ENCODE measurements at regions of chr15 and their contacts with region 1.

Region 1: DNA sequence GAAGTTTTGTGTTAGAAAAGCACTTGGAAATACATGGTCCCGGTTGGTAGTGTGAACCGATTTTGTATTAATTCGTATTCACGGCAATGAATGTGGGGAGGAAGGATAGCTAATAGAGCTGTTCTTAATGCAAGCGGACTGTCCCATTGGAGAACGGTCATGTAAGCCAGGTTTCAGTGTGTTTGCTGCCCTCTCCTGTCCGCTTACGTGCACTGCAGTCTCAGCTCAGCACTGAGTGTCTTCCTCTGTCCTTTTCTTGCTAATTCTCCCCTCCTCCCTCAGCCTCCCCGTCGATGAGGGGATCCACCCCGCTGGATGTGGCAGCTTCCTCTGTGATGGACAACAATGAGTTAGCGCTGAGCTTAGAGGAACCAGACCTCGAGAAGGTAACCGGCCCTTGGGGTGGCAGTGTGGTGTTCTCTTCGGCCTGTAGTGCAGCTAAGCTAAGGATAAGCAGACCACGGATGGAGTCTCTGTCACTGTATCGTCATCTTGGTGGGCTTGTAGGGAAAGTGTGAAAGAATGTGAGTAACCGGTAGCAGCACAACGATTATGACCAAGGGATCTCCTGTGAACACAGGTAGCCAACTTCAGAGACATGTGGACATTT is 267.5 kb upstream of the CHRM5 start:
- DNase-seq: peak; percentile 76
- H3K4me3 Mint-ChIP-seq: no peak overlapping the region
- H3K27ac Mint-ChIP-seq: no peak overlapping the region
- H3K4me1 Mint-ChIP-seq: no peaks in the 10 kb centered on the region
- H3K27me3 Mint-ChIP-seq: peaks cover 10% of the 10 kb centered on the region

Region 2: GRCh38 chr15:33234014-33234461 is 466.8 kb before region 1 on chr15:
- CTCF ChIA-PET with region 1: interaction called, 4 read pairs
- intact Hi-C with region 1: loop called (anchors 2 kb)
- DNase-seq: peak; percentile 10
- H3K4me3 Mint-ChIP-seq: no peak overlapping the region
- H3K27ac Mint-ChIP-seq: no peak overlapping the region
- H3K4me1 Mint-ChIP-seq: no peaks in the 10 kb centered on the region
- H3K27me3 Mint-ChIP-seq: peaks cover 6% of the 10 kb centered on the region

Region 3: DNA sequence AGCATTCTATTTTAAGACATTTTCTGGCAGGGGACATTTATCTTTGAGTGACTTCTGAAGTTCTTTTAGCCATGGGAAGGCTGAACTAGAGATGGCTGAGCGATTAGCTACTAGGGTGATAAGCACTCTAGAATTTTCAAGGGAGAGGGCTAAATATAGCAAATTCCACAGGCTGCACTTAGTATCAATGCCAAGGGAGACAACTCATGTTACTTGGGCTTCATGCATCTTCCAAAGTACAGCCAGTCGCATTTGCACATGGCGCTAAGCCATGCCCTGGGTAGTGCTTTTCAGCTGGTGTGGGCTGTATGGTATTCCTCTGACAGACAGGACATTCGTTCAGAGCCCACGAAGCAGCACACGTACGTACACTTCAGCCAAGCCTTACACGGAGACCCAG is 320.4 kb before region 1 on chr15:
- CTCF ChIA-PET with region 1: no interaction called
- intact Hi-C with region 1: no loop called
- DNase-seq: no peak
- H3K4me3 Mint-ChIP-seq: no peak overlapping the region
- H3K27ac Mint-ChIP-seq: no peak overlapping the region
- H3K4me1 Mint-ChIP-seq: no peaks in the 10 kb centered on the region
- H3K27me3 Mint-ChIP-seq: peaks cover 4% of the 10 kb centered on the region